ENCODE measurements at regions of chr9 and their contacts with region 1.

Region 1: DNA sequence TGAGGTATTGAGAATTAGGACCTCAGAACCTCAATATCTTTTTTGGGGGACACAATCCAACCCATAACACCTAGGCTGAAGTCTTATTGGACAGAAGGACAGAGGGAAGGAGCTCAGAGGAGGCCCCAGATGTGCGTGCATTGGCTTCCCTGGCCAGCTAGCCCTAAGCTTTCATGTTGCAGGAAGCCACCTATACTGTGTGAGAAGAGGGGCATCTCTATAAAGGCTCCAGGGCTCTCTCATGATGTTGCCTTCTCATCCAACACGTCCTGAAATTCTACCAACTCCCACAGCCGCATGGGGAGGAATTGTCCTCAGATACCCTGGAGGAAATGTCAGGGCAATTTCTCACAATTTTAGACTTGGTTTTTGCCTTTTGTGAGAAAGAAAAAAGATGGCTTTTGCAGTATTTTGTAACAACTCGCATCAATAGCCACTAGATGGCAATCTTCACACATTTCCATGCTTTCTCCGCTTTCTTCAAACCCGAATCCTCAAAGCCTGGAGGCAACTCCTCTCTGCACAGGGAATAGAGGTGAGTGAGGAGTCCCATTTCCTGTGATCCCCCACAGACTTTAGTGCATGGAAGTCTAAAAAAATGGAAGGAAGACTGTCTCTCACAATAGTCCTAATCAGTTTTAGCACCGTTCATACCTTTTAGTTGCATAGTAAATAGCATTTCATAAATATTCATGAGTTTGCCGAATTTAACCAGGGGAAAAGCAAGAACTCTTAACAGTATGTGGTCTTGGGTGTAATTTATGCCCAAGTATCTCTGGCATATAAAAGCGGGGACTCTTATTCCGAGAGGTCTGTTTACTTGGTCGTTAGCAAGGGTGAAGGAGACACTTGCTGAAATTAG is 7.4 kb upstream of the PPP3R2 start:
- DNase-seq: peak; percentile 44 to 47
- H3K4me3 ChIP-seq: no peak overlapping the region
- H3K4me3 Mint-ChIP-seq: no peak overlapping the region
- H3K27ac Mint-ChIP-seq: no peak overlapping the region
- H3K4me1 ChIP-seq: peaks cover 7% of the 10 kb centered on the region
- H3K4me1 Mint-ChIP-seq: no peaks in the 10 kb centered on the region
- H3K27me3 ChIP-seq: no peaks in the 10 kb centered on the region; the same call in 1 of the 2 replicates
- H3K27me3 Mint-ChIP-seq: peaks cover 10% of the 10 kb centered on the region
- CTCF ChIP-seq: peak in 1 of 2 experiments; percentile 59

Region 2: GRCh38 chr9:101618698-101619097 is 16.6 kb after region 1 on chr9:
- CTCF ChIA-PET with region 1: no interaction called
- POLR2A ChIA-PET with region 1: no interaction called
- intact Hi-C with region 1: no loop called
- DNase-seq: no peak
- H3K4me3 ChIP-seq: no peak overlapping the region
- H3K4me3 Mint-ChIP-seq: no peak overlapping the region
- H3K27ac Mint-ChIP-seq: no peak overlapping the region
- H3K4me1 ChIP-seq: no peaks in the 10 kb centered on the region
- H3K4me1 Mint-ChIP-seq: no peaks in the 10 kb centered on the region
- H3K27me3 ChIP-seq: no peaks in the 10 kb centered on the region
- H3K27me3 Mint-ChIP-seq: no peaks in the 10 kb centered on the region
- CTCF ChIP-seq: no peak

Region 3: DNA sequence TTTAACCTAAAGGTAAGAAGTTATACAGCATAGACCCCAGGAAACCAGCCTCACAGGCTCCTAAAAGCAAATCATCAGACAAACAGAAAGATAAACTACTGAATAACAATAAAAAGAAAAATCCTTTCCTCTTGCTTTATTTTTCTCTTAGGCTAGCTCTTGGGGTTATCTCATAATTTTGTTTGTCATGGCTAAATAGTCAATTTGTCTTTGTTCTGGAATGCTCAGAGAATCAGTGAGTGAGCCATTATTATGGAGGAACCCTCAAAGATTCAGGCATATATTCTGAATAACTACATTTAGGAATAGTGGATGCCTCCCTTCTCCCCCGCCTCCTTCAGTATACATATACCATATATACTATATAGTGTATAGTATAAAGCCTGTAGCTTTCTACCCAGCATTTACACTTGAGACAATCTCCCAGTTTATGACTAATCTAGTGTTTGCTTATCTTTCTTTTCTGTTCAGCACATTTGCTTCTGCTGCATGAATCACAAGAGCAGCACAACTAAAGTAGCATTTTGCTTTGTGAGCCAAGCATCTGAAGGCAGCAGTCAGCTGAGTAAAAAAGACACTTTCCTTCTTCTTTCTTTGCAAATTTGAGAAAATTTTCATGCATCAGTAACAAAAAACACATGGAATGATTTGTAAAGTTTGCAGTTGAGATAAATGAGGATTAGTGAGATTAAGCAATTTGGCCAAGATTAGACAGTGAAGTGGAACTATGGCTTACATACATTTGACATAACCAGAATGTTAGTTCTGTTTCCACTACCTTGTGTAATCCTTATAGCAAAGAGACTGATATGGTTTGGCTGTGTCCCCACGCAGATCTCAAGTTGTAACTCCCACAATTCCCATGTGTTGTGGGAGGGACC is 37.9 kb after region 1 on chr9:
- CTCF ChIA-PET with region 1: no interaction called
- POLR2A ChIA-PET with region 1: no interaction called
- intact Hi-C with region 1: no loop called
- DNase-seq: no peak
- H3K4me3 ChIP-seq: no peak overlapping the region
- H3K4me3 Mint-ChIP-seq: no peak overlapping the region
- H3K27ac Mint-ChIP-seq: no peak overlapping the region
- H3K4me1 ChIP-seq: no peaks in the 10 kb centered on the region
- H3K4me1 Mint-ChIP-seq: no peaks in the 10 kb centered on the region
- H3K27me3 ChIP-seq: no peaks in the 10 kb centered on the region
- H3K27me3 Mint-ChIP-seq: no peaks in the 10 kb centered on the region
- CTCF ChIP-seq: no peak

Region 4: DNA sequence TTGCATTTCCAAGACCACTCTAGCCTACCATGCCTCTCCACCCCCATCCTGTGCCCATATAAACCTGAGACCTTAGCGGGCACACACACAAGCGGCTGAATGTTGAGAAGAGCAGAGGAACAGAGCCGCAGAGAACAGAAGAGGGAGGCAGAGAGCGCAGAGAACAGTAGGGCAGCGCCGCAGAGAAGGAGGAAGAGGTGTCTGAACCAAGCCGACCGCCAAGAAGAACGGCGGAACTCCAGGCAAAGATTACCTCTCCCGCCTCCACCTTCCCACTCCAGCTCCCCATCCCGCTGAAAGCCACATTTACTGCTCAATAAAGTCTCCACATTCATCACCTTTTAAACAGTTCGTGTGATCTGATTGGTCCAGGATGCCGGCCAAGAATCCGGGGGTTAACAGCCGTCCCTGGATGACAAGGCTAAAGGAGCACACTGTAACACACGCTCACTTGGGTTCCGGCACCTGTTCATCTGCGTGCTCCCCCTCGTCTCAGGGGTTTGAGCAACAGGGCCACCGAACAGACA is 103.1 kb after region 1 on chr9:
- CTCF ChIA-PET with region 1: no interaction called
- POLR2A ChIA-PET with region 1: no interaction called
- intact Hi-C with region 1: loop called (anchors 2 kb)
- DNase-seq: peak; percentile 39 to 51
- H3K4me3 ChIP-seq: 0 out of 2 replicates have a peak overlapping the region, but pooled peaks have one; percentile 13
- H3K4me3 Mint-ChIP-seq: peak overlapping the region; percentile 61
- H3K27ac Mint-ChIP-seq: no peak overlapping the region
- H3K4me1 ChIP-seq: no peaks in the 10 kb centered on the region
- H3K4me1 Mint-ChIP-seq: no peaks in the 10 kb centered on the region
- H3K27me3 ChIP-seq: no peaks in the 10 kb centered on the region; the same call in 1 of the 2 replicates
- H3K27me3 Mint-ChIP-seq: no peaks in the 10 kb centered on the region
- CTCF ChIP-seq: peak in 1 of 2 experiments; percentile 22

Region 5: DNA sequence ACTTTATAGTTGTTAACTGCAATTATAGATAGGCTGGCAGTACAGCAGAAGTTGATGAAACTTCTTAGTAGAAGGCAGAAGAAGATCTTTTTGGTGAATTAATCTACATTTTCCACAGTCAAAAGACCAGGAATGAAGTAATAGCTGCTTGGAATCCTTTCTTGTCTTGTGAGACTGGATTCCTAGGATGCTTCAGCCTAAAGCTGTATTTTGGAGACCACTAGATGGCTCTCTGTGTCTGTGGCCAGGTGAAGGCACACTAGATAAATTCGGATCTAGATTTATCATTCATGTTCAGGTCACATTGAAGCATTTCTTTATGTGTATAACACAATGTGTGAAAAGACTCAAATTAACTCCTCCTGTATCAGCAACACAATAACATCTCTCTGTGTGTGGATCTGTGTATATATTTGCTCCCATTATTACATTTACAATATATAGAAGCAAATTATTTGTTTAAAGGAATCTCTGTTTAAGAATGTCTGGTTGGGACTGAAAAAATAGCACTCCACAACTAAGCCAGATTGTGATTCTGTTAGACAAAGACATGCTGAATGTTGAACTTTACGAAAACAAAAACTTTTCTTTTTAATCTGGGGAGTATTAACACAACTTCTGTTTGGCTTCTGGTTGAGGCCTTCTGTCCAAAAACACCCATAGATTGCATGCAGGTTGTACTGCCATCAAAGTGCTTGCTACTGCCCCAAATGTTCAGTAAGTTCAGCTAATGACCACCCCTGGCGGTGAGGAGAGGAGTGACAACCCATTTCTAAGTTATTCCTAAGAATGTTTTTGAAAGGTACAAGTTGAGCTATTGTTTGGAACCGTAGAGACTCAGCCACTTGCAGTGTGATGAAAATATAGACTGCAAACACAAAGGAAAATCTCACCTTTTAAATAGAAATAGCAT is 125.7 kb after region 1 on chr9:
- CTCF ChIA-PET with region 1: no interaction called
- POLR2A ChIA-PET with region 1: no interaction called
- intact Hi-C with region 1: loop called (anchors 1 kb)
- DNase-seq: peak in 1 of 2 experiments; percentile 41
- H3K4me3 ChIP-seq: no peak overlapping the region
- H3K4me3 Mint-ChIP-seq: no peak overlapping the region
- H3K27ac Mint-ChIP-seq: no peak overlapping the region
- H3K4me1 ChIP-seq: no peaks in the 10 kb centered on the region
- H3K4me1 Mint-ChIP-seq: peaks cover 11% of the 10 kb centered on the region
- H3K27me3 ChIP-seq: no peaks in the 10 kb centered on the region
- H3K27me3 Mint-ChIP-seq: peaks cover 5% of the 10 kb centered on the region
- CTCF ChIP-seq: peak; percentile 35 to 64

Region 6: DNA sequence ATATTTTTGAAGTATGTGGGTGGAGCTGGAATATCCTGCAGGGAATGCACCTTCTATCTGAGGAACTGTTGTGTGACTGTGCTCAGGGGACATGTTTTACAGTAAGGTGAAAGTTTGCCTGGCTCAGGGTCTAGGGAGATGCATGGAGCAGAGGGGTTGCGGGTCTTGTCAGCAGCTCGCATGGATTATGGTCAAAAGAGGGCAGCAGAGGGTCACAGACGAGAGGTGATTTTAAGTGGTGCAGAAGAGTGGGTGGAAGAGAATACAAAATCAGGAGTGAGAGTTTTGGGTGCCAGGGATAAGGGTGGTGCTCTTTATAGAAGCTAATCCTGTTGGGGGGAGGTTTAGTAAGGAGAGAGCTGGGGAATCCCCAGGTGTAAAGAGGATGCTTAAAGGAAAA is 189.8 kb after region 1 on chr9:
- CTCF ChIA-PET with region 1: no interaction called
- POLR2A ChIA-PET with region 1: no interaction called
- intact Hi-C with region 1: loop called (anchors 1 kb)
- DNase-seq: peak; percentile 55 to 73
- H3K4me3 ChIP-seq: no peak overlapping the region
- H3K4me3 Mint-ChIP-seq: no peak overlapping the region
- H3K27ac Mint-ChIP-seq: no peak overlapping the region
- H3K4me1 ChIP-seq: no peaks in the 10 kb centered on the region
- H3K4me1 Mint-ChIP-seq: no peaks in the 10 kb centered on the region
- H3K27me3 ChIP-seq: no peaks in the 10 kb centered on the region
- H3K27me3 Mint-ChIP-seq: no peaks in the 10 kb centered on the region
- CTCF ChIP-seq: peak; percentile 64 to 68

Region 7: GRCh38 chr9:101977614-101978210 is 375.6 kb after region 1 on chr9:
- CTCF ChIA-PET with region 1: no interaction called
- POLR2A ChIA-PET with region 1: no interaction called
- intact Hi-C with region 1: loop called (anchors 5 kb)
- DNase-seq: peak in 1 of 2 experiments; percentile 12
- H3K4me3 ChIP-seq: no peak overlapping the region
- H3K4me3 Mint-ChIP-seq: no peak overlapping the region
- H3K27ac Mint-ChIP-seq: no peak overlapping the region
- H3K4me1 ChIP-seq: no peaks in the 10 kb centered on the region
- H3K4me1 Mint-ChIP-seq: no peaks in the 10 kb centered on the region
- H3K27me3 ChIP-seq: no peaks in the 10 kb centered on the region
- H3K27me3 Mint-ChIP-seq: peaks cover 3% of the 10 kb centered on the region
- CTCF ChIP-seq: peak; percentile 43 to 56